Ascending aorta (tissue), 2 donors: ENCODE measurements at regions of chr6 and their contacts with region 1.

Region 1: DNA sequence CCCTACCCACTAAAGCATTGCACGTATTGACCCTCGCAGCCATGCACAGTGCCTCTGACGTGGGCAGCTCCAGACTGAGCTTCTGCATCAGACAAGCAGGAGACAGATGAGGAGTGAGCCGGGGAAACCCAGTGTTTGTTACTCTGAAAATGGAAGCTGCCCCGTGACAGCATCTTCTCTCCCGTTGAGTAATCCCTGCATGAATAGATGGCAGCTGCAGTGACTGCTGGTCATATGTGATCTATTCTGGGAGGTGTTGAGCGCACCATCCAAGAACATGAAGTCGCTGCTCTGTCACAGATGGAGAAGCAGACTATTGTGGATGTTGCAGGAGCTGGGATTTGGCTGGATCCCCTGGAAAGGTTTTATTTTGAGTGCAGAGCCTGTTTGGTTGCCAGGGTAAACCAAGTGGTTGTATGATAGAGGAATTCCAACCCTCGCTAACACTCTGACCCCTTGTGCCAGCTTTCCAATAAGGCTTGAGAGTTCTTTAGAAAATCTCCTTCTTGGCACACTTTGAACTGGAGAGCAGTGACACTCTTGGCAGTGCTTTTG is 242.2 kb downstream of the NRN1 start:
- DNase-seq: peak; percentile 56 to 79
- H3K4me3 ChIP-seq: peak overlapping the region in 1 of 2 donors; percentile 52
- H3K27ac ChIP-seq: peak overlapping the region; percentile 81 to 90
- H3K4me1 ChIP-seq: peaks cover 8 to 40% of the 10 kb centered on the region in 2 donors
- H3K27me3 ChIP-seq: no peaks in the 10 kb centered on the region
- CTCF ChIP-seq: no peak

Region 2: GRCh38 chr6:5626727-5627426 is 137.6 kb before region 1 on chr6:
- intact Hi-C with region 1: no loop called
- DNase-seq: no peak
- H3K4me3 ChIP-seq: no peak overlapping the region
- H3K27ac ChIP-seq: no peak overlapping the region
- H3K4me1 ChIP-seq: no peaks in the 10 kb centered on the region
- H3K27me3 ChIP-seq: no peaks in the 10 kb centered on the region
- CTCF ChIP-seq: no peak

Region 3: DNA sequence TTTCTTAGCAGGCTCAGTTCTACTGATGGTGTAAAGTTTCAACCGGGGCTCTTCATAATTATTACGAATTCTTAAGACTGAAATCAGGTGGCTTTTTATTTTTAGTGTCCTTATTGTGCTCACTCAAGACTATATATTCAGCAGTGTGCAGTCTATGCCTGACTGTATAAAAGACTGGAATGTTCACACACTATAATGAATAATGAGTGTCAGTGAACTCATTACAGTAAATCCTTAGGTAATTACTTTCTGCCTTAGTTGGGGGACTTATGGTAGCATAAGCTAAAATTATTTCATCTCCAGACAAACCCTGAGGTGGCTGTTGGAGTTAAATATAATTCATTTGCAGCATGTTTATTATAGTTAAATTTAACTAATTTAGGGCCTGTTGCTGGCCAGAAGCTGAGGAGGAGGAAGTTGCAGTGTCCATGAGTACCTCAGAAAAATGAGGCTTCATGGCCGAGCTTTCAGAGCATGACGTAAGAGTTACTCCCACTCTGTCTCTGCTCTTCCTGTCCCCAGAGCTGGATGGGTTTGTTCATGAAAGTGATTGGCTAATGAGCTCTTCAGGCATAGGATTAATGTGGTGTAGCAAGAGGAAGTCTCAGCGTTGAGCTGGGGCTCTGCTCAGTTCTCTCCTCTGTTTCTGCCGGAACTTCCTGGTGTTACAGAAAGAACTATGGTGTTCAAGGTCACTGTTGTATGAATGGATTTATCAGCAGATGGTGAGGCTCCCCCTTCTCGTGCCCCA is 93.5 kb before region 1 on chr6:
- intact Hi-C with region 1: loop called (anchors 1 kb)
- DNase-seq: no peak
- H3K4me3 ChIP-seq: no peak overlapping the region
- H3K27ac ChIP-seq: peak overlapping the region; percentile 74 to 80
- H3K4me1 ChIP-seq: peaks cover 12 to 15% of the 10 kb centered on the region in 2 donors
- H3K27me3 ChIP-seq: no peaks in the 10 kb centered on the region
- CTCF ChIP-seq: no peak

Region 4: GRCh38 chr6:5941188-5941587 is 176.7 kb after region 1 on chr6:
- intact Hi-C with region 1: loop called (anchors 2 kb)
- DNase-seq: no peak
- H3K4me3 ChIP-seq: no peak overlapping the region
- H3K27ac ChIP-seq: peak overlapping the region; percentile 26 to 35
- H3K4me1 ChIP-seq: peaks cover 0 to 14% of the 10 kb centered on the region in 2 donors
- H3K27me3 ChIP-seq: no peaks in the 10 kb centered on the region
- CTCF ChIP-seq: no peak

Region 5: GRCh38 chr6:6008648-6009421 is 244.4 kb after region 1 on chr6:
- intact Hi-C with region 1: loop called (anchors 5 kb)
- DNase-seq: no peak
- H3K4me3 ChIP-seq: peak overlapping the region; percentile 51 to 60
- H3K27ac ChIP-seq: peak overlapping the region; percentile 9 to 13
- H3K4me1 ChIP-seq: peaks cover 11 to 25% of the 10 kb centered on the region in 2 donors
- H3K27me3 ChIP-seq: peaks cover 36% of the 10 kb centered on the region
- CTCF ChIP-seq: no peak

Region 6: GRCh38 chr6:6940031-6941025 is 1175.8 kb after region 1 on chr6:
- intact Hi-C with region 1: no loop called
- DNase-seq: no peak
- H3K4me3 ChIP-seq: no peak overlapping the region
- H3K27ac ChIP-seq: no peak overlapping the region
- H3K4me1 ChIP-seq: no peaks in the 10 kb centered on the region
- H3K27me3 ChIP-seq: no peaks in the 10 kb centered on the region
- CTCF ChIP-seq: no peak